Sigmoid colon (tissue), 7 donors: ENCODE measurements at regions of chr2 and their contacts with region 1.

Region 1: DNA sequence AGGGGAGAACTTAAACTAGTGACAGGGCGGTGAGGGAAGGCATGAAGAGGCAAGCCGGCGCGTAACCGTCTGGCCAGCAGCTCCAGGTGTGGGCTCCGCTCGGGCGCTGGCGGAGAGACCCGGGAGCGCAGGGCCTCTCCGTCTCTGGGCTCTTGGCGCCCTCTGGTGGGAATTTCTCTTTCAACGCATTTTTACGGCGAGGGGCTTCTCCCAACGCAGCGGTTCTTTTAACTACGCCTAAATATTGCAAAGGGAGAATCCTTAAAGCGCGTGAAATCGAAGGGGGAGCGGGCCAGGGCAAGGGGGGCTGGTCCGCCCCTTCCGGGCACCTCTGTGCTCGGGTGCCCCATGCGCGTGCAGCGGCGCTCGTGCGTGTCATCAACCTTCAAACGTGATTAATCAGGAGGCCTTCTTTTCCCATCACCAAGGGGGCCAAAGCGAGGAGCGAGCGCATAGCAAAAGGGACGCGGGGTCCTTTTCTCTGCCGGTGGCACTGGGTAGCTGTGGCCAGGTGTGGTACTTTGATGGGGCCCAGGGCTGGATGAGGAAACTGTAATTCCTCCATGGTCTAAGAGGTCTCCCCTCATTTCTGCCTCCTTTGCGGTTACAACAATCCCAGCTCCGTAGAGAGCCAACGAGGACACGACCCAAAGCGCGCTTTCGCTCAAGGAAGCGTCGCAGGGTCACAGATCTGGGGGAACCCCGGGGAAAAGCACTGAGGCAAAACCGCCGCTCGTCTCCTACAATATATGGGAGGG is 762 bp upstream of the GAD1 start:
- DNase-seq: no peak
- H3K4me3 ChIP-seq: peak overlapping the region; percentile 1 to 41 (median 35)
- H3K27ac ChIP-seq: no peak overlapping the region
- H3K4me1 ChIP-seq: peaks cover 0 to 61% (median 56%) of the 10 kb centered on the region in 4 donors
- H3K27me3 ChIP-seq: peaks cover 77 to 82% (median 80%) of the 10 kb centered on the region in 3 donors
- CTCF ChIP-seq: peak; percentile 71 to 76 (median 73)
- EP300 ChIP-seq: no peak
- POLR2A ChIP-seq: no peak

Region 2: DNA sequence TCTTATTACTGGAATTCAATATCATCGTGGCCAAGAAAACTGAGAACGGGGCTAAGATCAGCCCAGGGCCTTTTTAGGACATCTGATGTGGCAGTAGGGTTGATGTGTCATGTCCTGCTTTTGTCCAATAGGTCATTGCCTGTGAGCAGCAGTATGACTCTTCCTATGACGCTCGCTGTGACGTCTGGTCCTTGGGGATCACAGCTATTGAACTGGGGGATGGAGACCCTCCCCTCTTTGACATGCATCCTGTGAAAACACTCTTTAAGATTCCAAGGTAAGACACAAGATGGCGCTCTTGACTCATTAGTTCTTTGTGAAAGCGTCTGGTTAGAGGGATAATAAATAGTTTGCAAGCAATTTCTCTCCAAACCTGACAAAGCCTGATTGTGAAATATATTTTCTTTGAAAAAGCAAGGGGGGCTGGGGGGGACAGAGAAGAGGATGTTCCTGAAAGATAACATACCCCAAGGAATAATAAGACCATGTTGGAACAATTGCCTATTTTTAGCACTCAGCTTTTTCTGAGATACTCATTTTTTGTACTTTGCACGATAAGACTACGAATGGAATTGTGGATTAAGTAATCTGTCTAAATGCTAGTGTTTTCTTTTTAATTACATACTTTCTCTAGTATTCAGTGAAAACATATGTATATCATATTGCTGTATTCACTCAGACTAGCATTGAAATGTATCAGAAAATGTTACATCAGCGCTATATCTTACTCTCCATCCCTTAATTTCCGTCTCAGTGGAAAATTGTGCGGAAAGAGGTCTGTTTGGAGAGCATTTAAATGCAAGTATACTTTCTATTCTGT is 579.9 kb before region 1 on chr2:
- intact Hi-C with region 1: loop called (anchors 5 kb)
- DNase-seq: no peak
- H3K4me3 ChIP-seq: no peak overlapping the region
- H3K27ac ChIP-seq: no peak overlapping the region
- H3K4me1 ChIP-seq: no peaks in the 10 kb centered on the region
- H3K27me3 ChIP-seq: no peaks in the 10 kb centered on the region
- CTCF ChIP-seq: peak in 1 of 4 experiments; percentile 12
- EP300 ChIP-seq: no peak
- POLR2A ChIP-seq: no peak

Region 3: DNA sequence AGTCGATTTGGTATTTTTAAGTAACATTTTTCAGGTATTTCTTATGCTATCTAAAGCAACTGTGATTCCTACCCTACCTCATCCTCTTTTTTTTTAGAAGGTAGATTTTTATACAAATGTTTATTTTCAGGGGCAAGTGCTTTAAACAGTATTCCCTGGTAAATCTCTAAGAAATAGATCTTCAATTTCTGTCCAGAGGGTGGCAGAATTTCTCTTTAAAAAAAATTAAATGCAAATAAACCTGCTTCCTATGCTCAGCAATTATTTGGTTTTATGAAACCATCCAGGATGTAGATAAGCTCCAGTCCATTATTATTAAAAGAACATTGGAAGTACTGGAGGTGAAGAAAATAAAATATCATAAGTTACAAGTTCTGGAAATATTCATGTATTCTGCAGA is 446.0 kb before region 1 on chr2:
- intact Hi-C with region 1: loop called (anchors 5 kb)
- DNase-seq: no peak
- H3K4me3 ChIP-seq: no peak overlapping the region
- H3K27ac ChIP-seq: no peak overlapping the region
- H3K4me1 ChIP-seq: no peaks in the 10 kb centered on the region
- H3K27me3 ChIP-seq: peaks cover 0 to 62% (median 9%) of the 10 kb centered on the region in 3 donors
- CTCF ChIP-seq: peak in 2 of 4 experiments; percentile 12 to 15
- EP300 ChIP-seq: no peak
- POLR2A ChIP-seq: no peak

Region 4: GRCh38 chr2:170461884-170462283 is 354.0 kb before region 1 on chr2:
- intact Hi-C with region 1: loop called (anchors 2 kb)
- DNase-seq: no peak
- H3K4me3 ChIP-seq: no peak overlapping the region
- H3K27ac ChIP-seq: no peak overlapping the region
- H3K4me1 ChIP-seq: no peaks in the 10 kb centered on the region
- H3K27me3 ChIP-seq: peaks cover 0 to 4% (median 0%) of the 10 kb centered on the region in 3 donors
- CTCF ChIP-seq: peak in 1 of 4 experiments; percentile 4
- EP300 ChIP-seq: no peak
- POLR2A ChIP-seq: no peak

Region 5: GRCh38 chr2:170715062-170715931 is 100.6 kb before region 1 on chr2 and contains the start of gene SP5:
- intact Hi-C with region 1: loop called (anchors 5 kb)
- DNase-seq: peak; percentile 85
- H3K4me3 ChIP-seq: peak within 1 kb of the TSS; percentile 27 to 58 (median 50)
- H3K27ac ChIP-seq: peak within 1 kb of the TSS; percentile 25 to 61 (median 50)
- H3K4me1 ChIP-seq: peaks cover 0 to 55% (median 48%) of the 10 kb centered on the region in 4 donors
- H3K27me3 ChIP-seq: peaks cover 47 to 97% (median 80%) of the 10 kb centered on the region in 3 donors
- CTCF ChIP-seq: no peak
- EP300 ChIP-seq: no peak
- POLR2A ChIP-seq: no peak
- total RNA-seq, gene SP5: 0.81 to 4.6 (median 2.0) TPM

Region 6: GRCh38 chr2:170848587-170848986 is 32.7 kb after region 1 on chr2:
- intact Hi-C with region 1: no loop called
- DNase-seq: no peak
- H3K4me3 ChIP-seq: no peak overlapping the region
- H3K27ac ChIP-seq: no peak overlapping the region
- H3K4me1 ChIP-seq: no peaks in the 10 kb centered on the region
- H3K27me3 ChIP-seq: no peaks in the 10 kb centered on the region
- CTCF ChIP-seq: no peak
- EP300 ChIP-seq: no peak
- POLR2A ChIP-seq: no peak